ENCODE measurements at regions of chr18 and their contacts with region 1.

Region 1: DNA sequence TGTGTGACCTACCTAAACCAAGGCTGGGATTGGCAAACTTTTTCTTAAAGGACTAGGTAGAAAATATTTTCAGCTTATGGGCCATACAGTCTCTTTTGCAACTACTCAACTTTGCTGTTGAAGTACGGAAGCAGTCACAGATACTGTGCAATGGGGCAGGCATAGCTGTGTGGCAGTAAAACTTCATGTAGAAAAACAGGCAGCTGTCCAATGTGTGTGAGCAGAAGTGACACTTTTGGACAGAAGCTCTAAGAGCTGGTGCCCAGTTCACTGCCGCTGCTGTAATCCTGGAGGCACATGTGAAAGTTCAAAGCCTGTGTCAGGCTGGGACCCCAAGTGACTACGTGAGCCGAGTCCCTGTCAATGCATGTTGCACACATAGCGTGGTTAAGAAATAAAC is 46.7 kb downstream of the MAPK4 start:
- DNase-seq: no peak
- H3K4me3 ChIP-seq: no peak overlapping the region
- H3K27ac ChIP-seq: no peak overlapping the region
- H3K4me1 ChIP-seq: no peaks in the 10 kb centered on the region
- H3K27me3 ChIP-seq: peaks cover 0 to 3% of the 10 kb centered on the region in 2 donors
- CTCF ChIP-seq: no peak
- POLR2A ChIP-seq: no peak

Region 2: DNA sequence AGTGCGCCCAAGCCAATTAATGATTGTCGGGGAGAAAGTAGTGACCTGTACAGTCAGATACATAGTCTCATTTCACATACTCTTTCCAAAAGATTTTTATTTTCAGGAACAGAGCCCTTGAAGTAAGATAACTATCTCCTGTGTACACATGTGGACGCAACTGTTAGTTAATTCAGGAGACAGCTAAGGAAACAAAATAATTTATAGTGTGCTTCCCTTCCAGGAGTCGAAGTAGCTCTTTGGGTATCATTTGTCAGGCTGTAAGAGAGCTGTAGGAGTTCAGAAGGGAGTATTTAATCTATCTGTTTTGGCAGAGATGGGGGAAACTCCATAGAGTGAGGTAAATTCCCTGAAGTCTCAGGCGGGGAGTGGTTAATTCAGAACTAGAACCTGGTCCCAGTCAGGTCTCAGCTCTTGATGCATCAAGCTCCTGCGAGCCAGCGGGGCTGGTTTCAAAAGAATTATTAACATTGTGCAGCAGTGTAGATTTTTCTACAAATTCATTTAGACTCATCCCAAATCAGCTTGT is 16.3 kb after region 1 on chr18:
- intact Hi-C with region 1: loop called (anchors 1 kb)
- DNase-seq: no peak
- H3K4me3 ChIP-seq: no peak overlapping the region
- H3K27ac ChIP-seq: no peak overlapping the region
- H3K4me1 ChIP-seq: no peaks in the 10 kb centered on the region
- H3K27me3 ChIP-seq: no peaks in the 10 kb centered on the region
- CTCF ChIP-seq: no peak
- POLR2A ChIP-seq: no peak